ENCODE measurements at regions of chr21 and their contacts with region 1.

Region 1: DNA sequence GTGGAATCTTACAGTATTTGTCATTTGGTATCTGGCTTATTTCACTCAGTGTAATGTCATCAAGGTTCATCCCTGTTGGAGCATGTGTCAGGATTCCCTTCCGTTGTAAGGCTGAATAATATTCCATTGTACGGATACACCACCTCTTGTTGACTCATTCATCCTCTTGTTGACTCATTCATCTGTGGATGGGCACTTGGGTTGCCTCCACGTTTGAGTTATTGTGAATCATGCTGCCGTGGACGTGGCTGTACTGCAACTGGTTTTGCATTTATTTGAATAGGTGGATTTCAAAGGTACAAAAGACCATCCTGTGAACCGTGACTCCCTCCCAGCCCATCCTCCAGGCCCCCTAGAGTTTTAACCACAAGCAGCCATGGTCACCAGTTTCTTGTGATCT is 11.9 kb upstream of the TCP10L start:
- DNase-seq: peak; percentile 12 to 56
- ATAC-seq: peak; percentile 65 to 88
- H3K4me3 ChIP-seq: no peak overlapping the region
- H3K27ac ChIP-seq: peak overlapping the region in 1 of 2 experiments; percentile 73; a peak in 3 of 6 replicates
- H3K4me1 ChIP-seq: peaks cover 14% of the 10 kb centered on the region; the same call in 2 of the 3 replicates
- CTCF ChIP-seq: no peak
- EP300 ChIP-seq: no peak
- POLR2A ChIP-seq: no peak
- RAD21 ChIP-seq: no peak

Region 2: DNA sequence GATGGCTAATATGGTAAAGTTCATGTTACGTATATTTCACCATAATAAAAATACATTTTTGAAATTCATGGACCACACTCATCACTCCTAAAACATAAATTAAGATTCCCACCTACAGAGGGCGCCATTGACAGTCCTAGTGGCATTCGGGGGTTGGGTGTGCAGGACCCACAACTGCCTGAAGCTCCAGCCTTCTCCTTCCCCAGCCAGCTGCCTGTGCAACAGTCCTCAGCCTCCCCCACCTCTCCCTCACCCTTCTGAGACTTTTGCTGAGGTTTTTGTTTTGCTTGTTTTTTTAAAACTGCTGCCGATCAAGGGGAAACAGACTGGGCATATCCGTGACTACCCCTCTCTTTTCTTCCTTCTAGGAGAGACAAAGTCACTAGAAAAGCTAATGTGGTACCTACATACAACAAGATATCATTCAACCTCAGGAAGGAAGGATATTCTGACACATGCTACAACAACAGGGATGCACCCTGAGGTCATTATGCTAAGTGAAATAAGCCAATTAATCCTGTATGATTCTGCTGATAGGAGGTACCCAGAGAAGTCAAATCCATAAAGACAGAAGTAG is 193.9 kb before region 1 on chr21:
- CTCF ChIA-PET with region 1: interaction called, 100 read pairs
- POLR2A ChIA-PET with region 1: interaction called, 6 read pairs
- DNase-seq: peak; percentile 45 to 62
- ATAC-seq: peak; percentile 81 to 94; a peak in 5 of 6 replicates
- H3K4me3 ChIP-seq: no peak overlapping the region
- H3K27ac ChIP-seq: peak overlapping the region; percentile 45 to 73; a peak in 5 of 6 replicates
- H3K4me1 ChIP-seq: peaks cover 10% of the 10 kb centered on the region
- CTCF ChIP-seq: peak; percentile 61
- EP300 ChIP-seq: no peak
- POLR2A ChIP-seq: no peak
- RAD21 ChIP-seq: peak; percentile 68 to 73

Region 3: GRCh38 chr21:32494934-32495703 is 102.1 kb before region 1 on chr21:
- CTCF ChIA-PET with region 1: interaction called, 10 read pairs
- POLR2A ChIA-PET with region 1: no interaction called
- DNase-seq: peak in 1 of 2 experiments; percentile 36
- ATAC-seq: no peak
- H3K4me3 ChIP-seq: no peak overlapping the region
- H3K27ac ChIP-seq: peak overlapping the region; percentile 55 to 74; a peak in 5 of 6 replicates
- H3K4me1 ChIP-seq: peaks cover 34% of the 10 kb centered on the region; the same call in 2 of the 3 replicates
- CTCF ChIP-seq: no peak
- EP300 ChIP-seq: no peak
- POLR2A ChIP-seq: no peak
- RAD21 ChIP-seq: no peak

Region 4: DNA sequence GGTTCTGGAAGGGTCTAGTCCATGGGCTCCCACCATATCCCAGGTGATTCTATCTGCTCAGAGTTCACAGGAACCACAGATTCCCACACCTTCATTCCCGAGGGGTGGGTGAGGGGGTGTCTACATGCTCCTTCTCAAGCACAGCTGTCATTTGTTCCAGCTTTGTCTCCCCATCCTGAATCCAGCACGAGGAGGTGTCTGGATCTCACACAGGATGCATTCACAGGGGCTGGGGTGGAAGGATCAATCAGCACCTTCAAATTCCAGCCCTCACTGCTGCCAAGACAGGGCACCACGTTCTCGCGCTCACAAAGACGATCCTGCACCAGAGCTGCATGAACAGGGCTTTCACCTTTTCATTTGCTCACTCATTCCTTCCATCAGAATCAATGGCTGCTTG is 64.6 kb before region 1 on chr21:
- CTCF ChIA-PET with region 1: no interaction called
- POLR2A ChIA-PET with region 1: no interaction called
- DNase-seq: no peak
- ATAC-seq: no peak
- H3K4me3 ChIP-seq: no peak overlapping the region
- H3K27ac ChIP-seq: no peak overlapping the region
- H3K4me1 ChIP-seq: peaks cover 6% of the 10 kb centered on the region; the same call in 1 of the 3 replicates
- CTCF ChIP-seq: no peak
- EP300 ChIP-seq: no peak
- POLR2A ChIP-seq: no peak
- RAD21 ChIP-seq: no peak

Region 5: GRCh38 chr21:32578107-32578692 is 19.0 kb before region 1 on chr21:
- CTCF ChIA-PET with region 1: interaction called, 18 read pairs
- POLR2A ChIA-PET with region 1: no interaction called
- DNase-seq: peak in 1 of 2 experiments; percentile 32
- ATAC-seq: peak; percentile 76 to 90; a peak in 5 of 6 replicates
- H3K4me3 ChIP-seq: no peak overlapping the region
- H3K27ac ChIP-seq: no peak overlapping the region
- H3K4me1 ChIP-seq: no peaks in the 10 kb centered on the region
- CTCF ChIP-seq: 0 out of 3 replicates have a peak, but pooled peaks have one; percentile 23
- EP300 ChIP-seq: no peak
- POLR2A ChIP-seq: no peak
- RAD21 ChIP-seq: peak; percentile 36 to 57; a peak in 4 of 5 replicates

Region 6: DNA sequence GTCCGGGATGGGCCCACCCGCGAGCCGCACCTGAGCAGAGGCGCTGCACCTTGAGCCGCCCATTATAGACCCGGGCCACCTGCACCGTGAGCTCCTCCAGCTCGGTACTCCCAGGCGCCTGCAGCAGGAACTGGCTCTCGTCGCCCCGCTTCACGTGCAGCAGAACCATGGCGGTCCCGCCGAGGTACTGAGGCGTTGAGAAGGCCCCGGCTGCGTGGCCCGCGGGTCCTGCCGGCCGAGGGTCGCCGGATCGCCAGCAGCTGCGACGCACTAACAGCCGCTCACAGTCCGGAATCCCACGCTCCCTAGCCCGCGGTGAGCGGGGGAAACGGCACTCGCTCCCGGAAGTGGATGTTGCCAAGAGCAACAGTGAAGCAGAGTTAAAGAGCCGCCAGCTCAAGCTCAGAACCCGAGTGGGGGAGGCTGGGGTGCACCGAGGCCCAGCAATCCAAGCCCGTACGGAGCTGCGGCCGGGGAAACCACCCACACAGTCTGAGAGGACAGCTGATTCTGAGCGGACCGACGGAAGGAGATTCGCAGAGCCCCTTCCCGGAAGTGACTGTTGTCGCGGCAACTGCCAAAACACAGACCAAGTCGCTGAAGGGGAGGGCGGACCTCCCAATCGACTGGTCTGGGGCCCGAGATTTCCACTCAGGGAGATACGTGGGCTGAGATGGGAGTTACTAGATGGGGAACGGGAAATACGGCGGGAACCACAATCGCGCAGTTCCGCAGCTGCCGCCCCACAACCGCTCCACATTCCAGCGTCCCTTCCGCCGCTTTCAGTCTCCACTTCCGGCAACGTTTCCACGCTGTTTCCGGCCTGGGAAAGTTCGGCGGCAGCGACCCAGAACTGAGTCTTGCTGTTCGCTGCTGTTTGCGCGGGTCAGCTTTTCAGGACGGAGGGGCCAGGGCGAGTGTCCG is 15.1 kb after region 1 on chr21 and contains the start of gene CFAP298:
- CTCF ChIA-PET with region 1: interaction called, 16 read pairs
- POLR2A ChIA-PET with region 1: interaction called, 8 read pairs
- DNase-seq: peak; percentile 73 to 92
- ATAC-seq: peak; percentile 98
- H3K4me3 ChIP-seq: peak within 1 kb of the TSS; percentile 54
- H3K27ac ChIP-seq: peak within 1 kb of the TSS; percentile 89 to 99
- H3K4me1 ChIP-seq: 0 out of 3 replicates have a peak, but pooled peaks cover 8% of the 10 kb centered on the region
- CTCF ChIP-seq: no peak
- EP300 ChIP-seq: no peak
- POLR2A ChIP-seq: peak; percentile 75
- RAD21 ChIP-seq: no peak
- polyA plus RNA-seq, gene CFAP298: 22.2 and 35.6 TPM in 2 replicates

Measured in A549 (cell line).